PC-9 (cell line): ENCODE measurements at regions of chrX and their contacts with region 1.

Region 1: GRCh38 chrX:139967300-139967699 is 2.0 kb upstream of the CXorf66 start:
- DNase-seq: no peak
- H3K4me3 ChIP-seq: no peak overlapping the region
- H3K27ac ChIP-seq: no peak overlapping the region
- H3K4me1 ChIP-seq: no peaks in the 10 kb centered on the region
- H3K27me3 ChIP-seq: no peaks in the 10 kb centered on the region
- CTCF ChIP-seq: peak; percentile 51

Region 2: DNA sequence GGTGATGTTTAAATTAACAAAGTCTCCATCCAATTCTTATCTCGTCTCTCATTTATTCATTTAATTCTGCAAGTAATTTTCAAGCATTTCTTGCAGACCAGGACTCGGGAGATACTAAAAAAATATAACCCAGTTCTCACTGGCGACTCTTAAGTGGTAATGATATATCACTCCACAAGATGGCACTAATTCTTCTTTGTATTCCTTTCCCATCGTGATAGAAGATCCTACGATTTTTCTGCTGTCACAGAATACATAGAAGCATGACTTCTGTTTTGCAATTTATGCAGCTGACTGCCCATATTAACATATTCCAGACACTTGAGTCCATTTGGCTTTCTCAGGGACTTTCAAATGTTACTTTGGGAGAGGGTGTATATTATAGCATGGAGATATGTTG is 1191.8 kb before region 1 on chrX:
- CTCF ChIA-PET with region 1: no interaction called
- POLR2A ChIA-PET with region 1: no interaction called
- intact Hi-C with region 1: loop called (anchors 5 kb)
- DNase-seq: no peak
- H3K4me3 ChIP-seq: no peak overlapping the region
- H3K27ac ChIP-seq: no peak overlapping the region
- H3K4me1 ChIP-seq: no peaks in the 10 kb centered on the region
- H3K27me3 ChIP-seq: no peaks in the 10 kb centered on the region
- CTCF ChIP-seq: peak; percentile 73

Region 3: GRCh38 chrX:139720136-139720535 is 247.2 kb before region 1 on chrX:
- CTCF ChIA-PET with region 1: no interaction called
- POLR2A ChIA-PET with region 1: no interaction called
- intact Hi-C with region 1: no loop called
- DNase-seq: peak in 1 of 2 experiments; percentile 7
- H3K4me3 ChIP-seq: no peak overlapping the region
- H3K27ac ChIP-seq: no peak overlapping the region
- H3K4me1 ChIP-seq: no peaks in the 10 kb centered on the region
- H3K27me3 ChIP-seq: no peaks in the 10 kb centered on the region
- CTCF ChIP-seq: no peak

Region 4: GRCh38 chrX:140123446-140123845 is 156.1 kb after region 1 on chrX:
- CTCF ChIA-PET with region 1: interaction called, 12 read pairs
- POLR2A ChIA-PET with region 1: no interaction called
- intact Hi-C with region 1: no loop called
- DNase-seq: peak in 1 of 2 experiments; percentile 2
- H3K4me3 ChIP-seq: no peak overlapping the region
- H3K27ac ChIP-seq: no peak overlapping the region
- H3K4me1 ChIP-seq: no peaks in the 10 kb centered on the region
- H3K27me3 ChIP-seq: peaks cover 3% of the 10 kb centered on the region; the same call in 1 of the 2 replicates
- CTCF ChIP-seq: no peak; the same call in 1 of the 2 replicates